SK-N-SH (cell line): ENCODE measurements at regions of chr4 and their contacts with region 1.

Region 1: GRCh38 chr4:1122505-1122904 is 9.1 kb upstream of the RNF212 start:
- DNase-seq: no peak
- H3K4me3 ChIP-seq: no peak overlapping the region
- H3K27ac ChIP-seq: no peak overlapping the region
- H3K4me1 ChIP-seq: no peaks in the 10 kb centered on the region
- H3K27me3 ChIP-seq: peaks cover 6% of the 10 kb centered on the region; the same call in 1 of the 2 replicates
- CTCF ChIP-seq: no peak
- EP300 ChIP-seq: no peak
- RAD21 ChIP-seq: no peak

Region 2: GRCh38 chr4:1266881-1267763 is 144.6 kb after region 1 on chr4:
- CTCF ChIA-PET with region 1: interaction called, 13 read pairs
- POLR2A ChIA-PET with region 1: no interaction called
- DNase-seq: no peak
- H3K4me3 ChIP-seq: no peak overlapping the region
- H3K27ac ChIP-seq: no peak overlapping the region
- H3K4me1 ChIP-seq: no peaks in the 10 kb centered on the region
- H3K27me3 ChIP-seq: no peaks in the 10 kb centered on the region
- CTCF ChIP-seq: no peak
- EP300 ChIP-seq: no peak
- RAD21 ChIP-seq: no peak